Right cardiac atrium (tissue), 5 donors: ENCODE measurements at regions of chr20 and their contacts with region 1.

Region 1: DNA sequence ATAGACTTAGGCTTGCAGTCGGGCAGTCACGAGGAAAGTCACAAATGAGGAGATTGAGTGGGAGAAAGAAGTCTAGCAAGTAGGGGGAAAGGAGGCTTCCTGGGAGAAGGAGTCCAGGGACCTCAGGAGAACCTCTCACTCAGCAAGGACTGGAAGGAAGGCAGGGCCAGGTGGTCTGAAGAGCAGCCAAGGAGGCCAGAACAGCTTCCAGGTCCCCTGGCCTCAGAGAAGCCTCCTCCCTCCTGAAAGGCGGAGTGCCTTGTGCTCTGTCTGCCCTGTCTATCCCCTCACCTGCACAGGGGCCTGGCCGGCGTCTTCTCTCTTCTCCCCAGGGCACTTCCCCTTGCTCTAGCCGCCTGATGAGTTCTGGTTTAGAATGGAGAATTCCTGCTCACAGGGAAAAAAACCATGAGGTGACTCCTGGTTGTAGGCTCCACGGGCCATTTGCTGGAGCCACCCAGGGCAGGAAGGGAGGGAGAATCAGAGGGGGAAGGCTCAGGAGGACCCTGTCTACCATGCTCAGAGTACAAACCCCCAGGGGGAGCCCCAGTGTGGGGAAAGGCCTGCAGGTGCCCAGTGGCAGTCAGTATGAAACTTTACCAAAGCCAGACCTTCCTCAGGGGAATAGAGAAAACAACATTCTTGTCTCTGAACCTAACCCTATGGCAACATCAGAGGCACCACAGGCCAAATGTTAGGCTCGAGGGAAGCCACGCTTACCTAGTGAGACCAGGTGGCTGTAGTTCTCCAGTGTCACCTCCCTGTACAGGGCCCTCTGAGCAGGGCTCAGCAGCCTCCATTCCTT is 11.2 kb downstream of the ZNF337 start:
- DNase-seq: peak in 2 of 3 donors; percentile 23 to 30
- ATAC-seq: peak; percentile 29 to 33
- H3K4me3 ChIP-seq: no peak overlapping the region
- H3K27ac ChIP-seq: no peak overlapping the region
- H3K4me1 ChIP-seq: no peaks in the 10 kb centered on the region
- H3K27me3 ChIP-seq: no peaks in the 10 kb centered on the region

Region 2: GRCh38 chr20:25508078-25508770 is 177.3 kb before region 1 on chr20:
- intact Hi-C with region 1: no loop called
- DNase-seq: peak in 2 of 3 donors; percentile 28 to 29
- ATAC-seq: peak; percentile 33 to 48
- H3K4me3 ChIP-seq: no peak overlapping the region
- H3K27ac ChIP-seq: no peak overlapping the region
- H3K4me1 ChIP-seq: no peaks in the 10 kb centered on the region
- H3K27me3 ChIP-seq: no peaks in the 10 kb centered on the region

Region 3: GRCh38 chr20:25623736-25624499 is 61.6 kb before region 1 on chr20 and contains the start of gene NANP:
- intact Hi-C with region 1: loop called in 1 of 4 experiments (anchors 10 kb)
- DNase-seq: peak; percentile 97 to 99 (median 98)
- ATAC-seq: peak; percentile 98
- H3K4me3 ChIP-seq: peak within 1 kb of the TSS; percentile 65
- H3K27ac ChIP-seq: peak within 1 kb of the TSS; percentile 87
- H3K4me1 ChIP-seq: peaks cover 2% of the 10 kb centered on the region
- H3K27me3 ChIP-seq: no peaks in the 10 kb centered on the region
- total RNA-seq, gene NANP: 3.5 to 5.1 (median 4.2) TPM

Region 4: DNA sequence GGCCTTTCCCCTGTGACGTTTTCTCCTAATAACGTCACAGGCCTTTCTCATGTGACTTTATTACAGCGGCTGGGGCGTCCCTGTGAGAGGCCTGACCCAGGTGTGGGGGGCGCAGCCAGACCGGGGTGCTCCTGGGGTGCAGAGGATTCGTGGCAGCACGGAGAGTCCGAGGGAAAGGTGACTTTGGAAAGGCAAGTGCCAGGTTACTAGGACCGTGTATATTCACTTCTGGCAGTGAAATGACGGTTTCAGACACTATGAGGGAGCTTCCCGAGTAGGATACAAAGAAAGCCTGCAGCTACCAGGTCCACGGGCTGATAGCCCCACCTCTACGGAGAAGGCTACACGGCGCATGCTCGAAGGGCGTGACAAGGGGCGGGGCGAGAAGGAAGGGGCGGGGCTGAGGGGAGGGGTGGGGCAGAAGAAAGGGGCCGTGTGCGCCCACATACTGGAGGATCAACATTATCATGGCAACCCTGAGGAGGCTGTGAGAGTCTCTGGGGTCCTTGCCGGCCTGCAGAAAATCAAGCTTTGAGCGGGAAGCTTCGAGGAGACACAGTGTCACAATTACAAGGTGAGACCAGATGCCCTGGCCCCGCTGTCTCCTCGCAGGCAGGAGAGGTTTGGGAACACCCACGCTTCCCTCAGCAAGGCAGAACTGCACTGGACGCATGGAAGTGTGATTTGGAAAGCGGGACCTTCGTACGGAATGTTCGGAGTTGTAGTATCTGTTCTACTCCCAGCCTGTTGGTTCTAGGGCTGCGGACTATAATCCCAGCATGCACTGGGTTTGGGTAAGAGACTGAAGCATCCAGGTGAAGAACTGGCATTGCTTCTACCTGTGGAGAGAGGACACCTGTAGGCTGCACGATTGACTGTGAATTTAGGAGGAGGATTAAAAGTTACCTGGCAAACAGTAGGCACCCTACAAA is 65.6 kb after region 1 on chr20:
- intact Hi-C with region 1: no loop called
- DNase-seq: peak; percentile 46 to 83 (median 77)
- ATAC-seq: peak; percentile 98
- H3K4me3 ChIP-seq: peak overlapping the region; percentile 38
- H3K27ac ChIP-seq: no peak overlapping the region
- H3K4me1 ChIP-seq: no peaks in the 10 kb centered on the region
- H3K27me3 ChIP-seq: no peaks in the 10 kb centered on the region